Posterior vena cava (tissue), 2 donors: ENCODE measurements at regions of chr21 and their contacts with region 1.

Region 1: DNA sequence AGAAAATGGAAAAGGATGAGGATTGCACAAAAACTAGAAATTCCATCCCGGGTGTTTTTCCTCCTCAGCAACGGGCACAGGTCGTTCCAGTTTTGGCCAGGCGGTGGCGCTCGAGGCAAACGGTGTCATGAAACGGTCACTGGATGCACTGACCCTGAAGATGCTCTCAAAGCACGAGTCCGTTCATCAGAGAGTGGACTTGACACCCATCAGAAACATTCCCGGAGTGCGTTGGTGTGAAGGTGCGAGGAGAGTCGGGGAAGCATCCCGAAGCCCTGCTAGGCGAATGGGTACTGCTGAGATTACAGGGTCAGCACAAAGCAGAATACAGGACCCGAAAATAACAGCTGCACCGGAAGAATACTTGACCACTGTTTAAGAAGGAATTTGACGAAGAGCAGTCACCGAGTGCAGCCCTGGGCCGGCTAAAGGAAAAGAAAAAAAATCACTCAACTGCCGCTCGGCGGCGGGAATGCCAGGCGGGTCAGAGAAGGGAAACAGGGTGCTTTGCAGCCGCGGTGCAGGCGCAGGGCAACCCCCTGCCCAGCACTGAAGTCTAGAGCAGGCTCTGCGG is 71.7 kb upstream of the ETS2 start:
- DNase-seq: peak; percentile 98

Region 2: GRCh38 chr21:39071623-39072214 is 337.7 kb after region 1 on chr21:
- intact Hi-C with region 1: no loop called
- DNase-seq: no peak

Region 3: GRCh38 chr21:39125752-39126485 is 391.9 kb after region 1 on chr21:
- intact Hi-C with region 1: loop called in 1 of 2 experiments (anchors 5 kb)
- DNase-seq: peak; percentile 75

Region 4: DNA sequence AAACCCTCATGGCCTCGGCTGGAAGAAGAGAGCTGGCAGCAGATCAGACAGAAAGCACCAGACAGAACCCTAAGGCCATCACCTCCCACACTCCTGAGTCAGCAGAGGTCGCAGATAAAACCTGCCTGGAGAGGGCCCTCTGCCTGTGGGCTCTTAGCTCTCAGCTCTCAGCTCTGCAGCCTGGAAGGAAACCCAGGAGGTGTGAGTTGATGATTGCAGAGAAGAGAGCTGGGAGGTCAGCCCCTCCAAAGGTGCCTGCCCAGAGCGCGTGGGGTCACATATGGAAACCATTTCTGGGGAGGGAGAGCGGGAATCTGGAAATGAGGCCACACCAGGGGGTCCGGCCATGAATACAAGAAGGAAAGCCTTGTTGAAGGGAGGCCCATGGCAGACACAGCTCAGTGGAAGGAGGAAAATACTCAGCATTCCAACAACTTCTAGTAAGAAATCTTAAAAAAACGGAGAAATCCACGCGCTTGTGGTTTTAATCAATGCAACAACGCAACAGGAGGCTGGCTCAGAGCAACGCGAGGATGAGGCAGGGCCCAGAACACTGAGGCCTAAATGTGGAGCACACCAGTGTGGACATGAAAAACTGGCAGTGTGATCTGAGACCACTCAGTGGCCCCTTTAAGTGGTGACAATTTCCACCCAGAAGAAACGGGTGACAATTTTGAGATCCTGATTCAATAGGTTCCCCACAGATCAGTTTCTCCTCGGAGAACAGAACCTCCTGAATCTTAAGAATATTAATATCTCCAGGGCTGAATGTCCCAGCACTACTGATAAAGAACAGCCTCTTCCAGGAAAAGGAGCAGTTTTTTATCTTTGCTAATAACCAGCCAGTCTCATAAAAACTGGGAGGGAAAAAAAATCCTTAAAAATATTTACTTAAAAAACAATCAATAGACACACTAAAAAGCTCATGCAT is 403.5 kb after region 1 on chr21:
- intact Hi-C with region 1: loop called (anchors 5 kb)
- DNase-seq: no peak